ENCODE measurements at regions of chr6 and their contacts with region 1.

Region 1: GRCh38 chr6:12150812-12151432 is 138.8 kb downstream of the HIVEP1 start:
- DNase-seq: peak in 8 of 9 experiments; percentile 11 to 63 (median 50)
- ATAC-seq: peak; percentile 73
- H3K4me3 ChIP-seq: no peak overlapping the region
- H3K4me3 Mint-ChIP-seq: no peak overlapping the region
- H3K27ac ChIP-seq: no peak overlapping the region
- H3K27ac Mint-ChIP-seq: no peak overlapping the region
- H3K4me1 ChIP-seq: no peaks in the 10 kb centered on the region
- H3K4me1 Mint-ChIP-seq: no peaks in the 10 kb centered on the region
- H3K27me3 ChIP-seq: no peaks in the 10 kb centered on the region
- H3K27me3 Mint-ChIP-seq: no peaks in the 10 kb centered on the region
- CTCF ChIP-seq: peak; percentile 60

Region 2: GRCh38 chr6:12119085-12119588 is 31.8 kb before region 1 on chr6:
- CTCF ChIA-PET with region 1: no interaction called
- POLR2A ChIA-PET with region 1: no interaction called
- intact Hi-C with region 1: no loop called
- DNase-seq: peak in 8 of 9 experiments; percentile 1 to 87 (median 22)
- ATAC-seq: peak; percentile 84
- H3K4me3 ChIP-seq: no peak overlapping the region
- H3K4me3 Mint-ChIP-seq: peak overlapping the region; percentile 10
- H3K27ac ChIP-seq: no peak overlapping the region
- H3K27ac Mint-ChIP-seq: peak overlapping the region; percentile 47
- H3K4me1 ChIP-seq: peaks cover 22% of the 10 kb centered on the region
- H3K4me1 Mint-ChIP-seq: peaks cover 41% of the 10 kb centered on the region
- H3K27me3 ChIP-seq: no peaks in the 10 kb centered on the region
- H3K27me3 Mint-ChIP-seq: no peaks in the 10 kb centered on the region
- CTCF ChIP-seq: no peak

Region 3: GRCh38 chr6:12137480-12137879 is 13.4 kb before region 1 on chr6:
- CTCF ChIA-PET with region 1: no interaction called
- POLR2A ChIA-PET with region 1: no interaction called
- intact Hi-C with region 1: no loop called
- DNase-seq: no peak
- ATAC-seq: no peak
- H3K4me3 ChIP-seq: no peak overlapping the region
- H3K4me3 Mint-ChIP-seq: no peak overlapping the region
- H3K27ac ChIP-seq: no peak overlapping the region
- H3K27ac Mint-ChIP-seq: no peak overlapping the region
- H3K4me1 ChIP-seq: peaks cover 15% of the 10 kb centered on the region
- H3K4me1 Mint-ChIP-seq: peaks cover 22% of the 10 kb centered on the region
- H3K27me3 ChIP-seq: no peaks in the 10 kb centered on the region
- H3K27me3 Mint-ChIP-seq: no peaks in the 10 kb centered on the region
- CTCF ChIP-seq: no peak

Region 4: DNA sequence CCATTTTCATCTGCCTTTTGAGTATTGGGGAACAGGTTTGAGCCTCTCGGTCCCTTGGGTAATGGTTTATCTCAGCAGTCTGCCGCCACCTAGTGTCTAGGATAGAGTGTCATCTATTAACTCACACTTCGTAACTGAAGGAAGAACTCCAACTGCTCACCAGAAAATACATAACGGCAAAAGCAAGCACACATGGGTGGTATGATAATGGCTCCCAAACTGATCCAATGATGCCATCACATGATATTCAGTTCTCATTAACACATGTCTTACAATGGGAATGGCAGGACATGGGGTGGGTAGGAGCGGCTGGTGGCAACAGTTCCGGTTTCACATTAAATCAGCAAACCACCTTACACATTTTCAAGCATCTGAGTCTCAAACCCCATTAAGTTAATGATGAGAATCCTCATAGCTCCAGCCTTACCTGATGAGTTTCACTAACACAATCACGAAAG is 455.0 kb after region 1 on chr6:
- CTCF ChIA-PET with region 1: no interaction called
- POLR2A ChIA-PET with region 1: no interaction called
- intact Hi-C with region 1: loop called in 1 of 2 experiments (anchors 10 kb)
- DNase-seq: peak in 5 of 9 experiments; percentile 4 to 55 (median 22)
- ATAC-seq: no peak
- H3K4me3 ChIP-seq: no peak overlapping the region
- H3K4me3 Mint-ChIP-seq: no peak overlapping the region
- H3K27ac ChIP-seq: no peak overlapping the region
- H3K27ac Mint-ChIP-seq: no peak overlapping the region
- H3K4me1 ChIP-seq: no peaks in the 10 kb centered on the region
- H3K4me1 Mint-ChIP-seq: no peaks in the 10 kb centered on the region
- H3K27me3 ChIP-seq: no peaks in the 10 kb centered on the region
- H3K27me3 Mint-ChIP-seq: peaks cover 13% of the 10 kb centered on the region
- CTCF ChIP-seq: no peak

Measured in CD8-positive, alpha-beta T cell (primary cell).